ENCODE measurements at regions of chr19 and their contacts with region 1.

Region 1: GRCh38 chr19:50785329-50785728 is 4.9 kb upstream of the ACP4 start:
- DNase-seq: no peak
- ATAC-seq: no peak
- H3K4me3 ChIP-seq: no peak overlapping the region
- H3K27ac ChIP-seq: no peak overlapping the region
- H3K4me1 ChIP-seq: peaks cover 0 to 3% of the 10 kb centered on the region in 2 experiments; a peak in 1 of 4 replicates
- H3K27me3 ChIP-seq: no peaks in the 10 kb centered on the region
- CTCF ChIP-seq: no peak
- POLR2A ChIP-seq: no peak
- RAD21 ChIP-seq: no peak

Region 2: DNA sequence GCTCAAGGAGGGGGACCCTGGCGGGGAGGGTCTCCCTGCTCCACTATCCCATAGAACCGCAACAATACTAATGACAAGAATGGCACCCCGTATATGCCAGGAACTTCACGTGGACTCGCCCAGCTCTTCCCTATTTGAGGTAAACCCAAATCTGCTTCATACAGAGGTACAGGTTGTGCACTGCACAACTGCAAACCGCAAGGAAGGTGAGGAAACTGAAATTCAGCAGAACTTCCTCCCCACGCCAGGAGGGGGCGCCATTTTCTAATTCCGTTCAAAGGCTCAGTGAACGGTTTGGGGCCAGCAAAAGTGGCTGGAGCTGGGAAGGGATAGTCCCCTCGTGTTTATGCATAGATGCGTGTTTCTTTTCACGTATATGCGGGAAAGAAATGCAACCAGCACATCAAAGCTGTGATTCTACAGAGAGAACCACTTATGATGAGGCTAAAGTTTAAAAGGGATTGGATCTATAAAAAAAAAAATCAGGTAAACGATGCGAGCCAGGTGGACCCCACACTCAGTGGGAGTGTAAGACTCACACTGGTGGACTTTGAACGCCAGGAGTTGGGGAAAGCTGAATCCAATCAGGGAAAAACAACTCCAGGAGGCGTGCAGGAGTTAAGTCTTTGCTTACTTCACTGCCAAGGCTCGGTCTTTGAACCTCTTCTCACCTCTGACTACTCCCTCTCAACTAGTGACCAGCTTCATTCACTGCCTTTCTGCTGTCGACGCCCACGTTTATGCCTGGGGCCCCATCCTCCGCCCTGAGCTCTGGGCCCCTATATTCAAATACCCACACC is 115.8 kb before region 1 on chr19:
- CTCF ChIA-PET with region 1: interaction called, 13 read pairs
- POLR2A ChIA-PET with region 1: no interaction called
- RAD21 ChIA-PET with region 1: no interaction called
- intact Hi-C with region 1: no loop called
- DNase-seq: no peak
- ATAC-seq: peak; percentile 81
- H3K4me3 ChIP-seq: no peak overlapping the region
- H3K27ac ChIP-seq: no peak overlapping the region
- H3K4me1 ChIP-seq: peaks cover 0 to 9% of the 10 kb centered on the region in 2 experiments; a peak in 1 of 4 replicates
- H3K27me3 ChIP-seq: no peaks in the 10 kb centered on the region
- CTCF ChIP-seq: peak; percentile 65 to 98 (median 88); a peak in 5 of 6 replicates
- POLR2A ChIP-seq: no peak
- RAD21 ChIP-seq: peak; percentile 51

Region 3: DNA sequence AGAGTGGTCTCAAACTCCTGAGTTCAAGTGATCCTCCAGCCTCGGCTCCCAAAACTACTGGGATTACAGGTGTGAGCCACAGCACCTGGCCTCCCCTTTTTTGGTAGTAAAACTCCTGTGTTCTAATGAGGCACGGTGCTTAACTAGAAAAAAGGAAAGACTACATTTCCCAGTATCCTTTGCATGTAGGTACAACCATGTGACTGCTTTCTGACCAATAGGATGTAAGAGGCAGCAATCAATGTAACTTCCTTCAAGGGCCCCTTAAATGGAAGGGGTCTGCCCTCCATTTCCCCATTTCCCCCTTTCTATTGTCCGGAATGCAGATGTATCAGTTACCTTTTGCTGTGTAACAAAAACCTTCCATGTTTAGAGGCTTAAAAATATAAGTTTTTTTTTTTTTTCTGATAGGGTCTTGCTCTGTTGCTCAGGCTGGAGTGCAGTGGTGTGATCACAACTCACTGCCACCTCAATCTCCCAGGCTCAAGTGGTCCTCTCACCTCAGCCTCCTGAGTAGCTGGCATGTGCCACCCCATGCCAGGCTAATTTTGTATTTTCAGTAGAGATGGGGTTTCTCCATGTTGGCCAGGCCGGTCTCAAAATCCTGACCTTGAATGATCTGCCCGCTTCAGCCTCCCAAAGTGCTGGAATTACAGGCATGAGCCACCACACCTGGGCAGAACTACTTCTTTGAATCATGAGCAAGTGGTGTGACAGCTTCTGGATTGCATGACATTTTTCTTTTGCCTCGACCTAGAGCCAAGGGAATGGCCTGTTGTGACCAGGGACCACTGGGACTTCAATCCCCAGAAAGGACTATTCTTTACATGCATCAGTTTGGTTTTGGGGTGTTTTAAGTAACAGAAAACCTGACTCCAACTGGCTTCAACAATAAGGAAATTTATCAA is 12.7 kb before region 1 on chr19:
- CTCF ChIA-PET with region 1: no interaction called
- POLR2A ChIA-PET with region 1: no interaction called
- RAD21 ChIA-PET with region 1: no interaction called
- intact Hi-C with region 1: no loop called
- DNase-seq: peak; percentile 48
- ATAC-seq: peak; percentile 90
- H3K4me3 ChIP-seq: no peak overlapping the region
- H3K27ac ChIP-seq: no peak overlapping the region
- H3K4me1 ChIP-seq: peaks cover 2 to 8% of the 10 kb centered on the region in 2 experiments; a peak in 3 of 4 replicates
- H3K27me3 ChIP-seq: peaks cover 2% of the 10 kb centered on the region; the same call in 1 of the 2 replicates
- CTCF ChIP-seq: no peak
- POLR2A ChIP-seq: no peak
- RAD21 ChIP-seq: no peak

Region 4: GRCh38 chr19:50804420-50805272 is 19.3 kb after region 1 on chr19:
- CTCF ChIA-PET with region 1: no interaction called
- POLR2A ChIA-PET with region 1: no interaction called
- RAD21 ChIA-PET with region 1: no interaction called
- intact Hi-C with region 1: no loop called
- DNase-seq: peak; percentile 98
- ATAC-seq: peak; percentile 92
- H3K4me3 ChIP-seq: peak overlapping the region; percentile 89 to 94
- H3K27ac ChIP-seq: peak overlapping the region; percentile 93
- H3K4me1 ChIP-seq: peaks cover 9 to 24% of the 10 kb centered on the region in 2 experiments
- H3K27me3 ChIP-seq: no peaks in the 10 kb centered on the region
- CTCF ChIP-seq: no peak
- POLR2A ChIP-seq: peak; percentile 98
- RAD21 ChIP-seq: no peak